Ovary (tissue), 10 donors: ENCODE measurements at regions of chr16 and their contacts with region 1.

Region 1: GRCh38 chr16:31196324-31197088 is 6.1 kb downstream of the PYCARD start:
- DNase-seq: no peak
- H3K4me3 ChIP-seq: no peak overlapping the region
- H3K27ac ChIP-seq: no peak overlapping the region
- H3K4me1 ChIP-seq: peaks cover 3% of the 10 kb centered on the region
- H3K27me3 ChIP-seq: no peaks in the 10 kb centered on the region
- CTCF ChIP-seq: no peak
- EP300 ChIP-seq: no peak
- POLR2A ChIP-seq: no peak

Region 2: DNA sequence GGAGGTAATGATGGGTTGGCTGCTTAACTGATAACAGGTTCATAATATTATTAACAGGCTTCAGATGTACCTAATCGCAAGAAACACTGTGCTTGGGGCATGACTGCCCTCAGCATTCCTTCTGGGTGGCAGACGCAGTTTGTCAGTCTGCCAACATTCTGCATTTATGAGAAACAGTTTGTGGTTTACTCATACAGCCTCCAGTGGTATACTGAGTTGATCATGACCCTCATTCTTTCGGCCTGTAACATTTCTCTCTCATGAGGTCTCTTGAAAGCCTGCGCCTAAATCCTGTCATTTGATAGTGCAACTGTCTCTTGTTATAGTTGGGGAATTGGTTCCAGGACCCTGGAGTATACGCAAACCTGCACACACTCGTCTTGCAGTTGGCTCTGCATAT is 316.6 kb after region 1 on chr16:
- intact Hi-C with region 1: loop called in 1 of 4 experiments (anchors 10 kb)
- DNase-seq: no peak
- H3K4me3 ChIP-seq: no peak overlapping the region
- H3K27ac ChIP-seq: no peak overlapping the region
- H3K4me1 ChIP-seq: peaks cover 2% of the 10 kb centered on the region
- H3K27me3 ChIP-seq: no peaks in the 10 kb centered on the region
- CTCF ChIP-seq: no peak
- EP300 ChIP-seq: no peak
- POLR2A ChIP-seq: no peak